Activated naive CD4-positive, alpha-beta T cell treated with anti-CD3 and anti-CD28 coated beads for 36 hours (primary cell): ENCODE measurements at regions of chr12 and their contacts with region 1.

Region 1: GRCh38 chr12:31245822-31246469 is 80.0 kb downstream of the SINHCAF start:
- DNase-seq: no peak
- H3K4me3 Mint-ChIP-seq: no peak overlapping the region
- H3K27ac Mint-ChIP-seq: no peak overlapping the region
- H3K4me1 Mint-ChIP-seq: no peaks in the 10 kb centered on the region
- H3K27me3 Mint-ChIP-seq: no peaks in the 10 kb centered on the region

Region 2: DNA sequence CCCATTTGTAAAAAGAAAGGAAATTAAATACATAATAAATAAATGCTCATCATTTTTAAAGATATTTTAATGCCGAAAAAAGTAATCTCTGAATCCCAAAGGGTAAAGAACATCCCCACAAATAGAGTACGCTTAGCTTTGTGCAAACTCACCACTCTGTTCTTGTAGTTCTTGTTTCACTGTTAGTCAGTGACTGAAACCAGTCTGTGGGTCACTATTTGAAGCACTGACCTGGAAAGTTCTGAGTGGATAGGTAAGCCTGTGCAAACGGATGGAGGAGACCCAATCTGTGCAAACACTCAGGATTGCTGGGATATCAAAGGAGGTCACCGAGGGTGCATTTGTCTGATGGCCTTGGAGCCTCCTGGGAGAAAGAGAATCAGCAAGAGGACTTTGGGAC is 387.5 kb before region 1 on chr12:
- CTCF ChIA-PET with region 1: no interaction called
- intact Hi-C with region 1: no loop called
- DNase-seq: no peak
- H3K4me3 Mint-ChIP-seq: no peak overlapping the region
- H3K27ac Mint-ChIP-seq: no peak overlapping the region
- H3K4me1 Mint-ChIP-seq: no peaks in the 10 kb centered on the region
- H3K27me3 Mint-ChIP-seq: peaks cover 4% of the 10 kb centered on the region

Region 3: DNA sequence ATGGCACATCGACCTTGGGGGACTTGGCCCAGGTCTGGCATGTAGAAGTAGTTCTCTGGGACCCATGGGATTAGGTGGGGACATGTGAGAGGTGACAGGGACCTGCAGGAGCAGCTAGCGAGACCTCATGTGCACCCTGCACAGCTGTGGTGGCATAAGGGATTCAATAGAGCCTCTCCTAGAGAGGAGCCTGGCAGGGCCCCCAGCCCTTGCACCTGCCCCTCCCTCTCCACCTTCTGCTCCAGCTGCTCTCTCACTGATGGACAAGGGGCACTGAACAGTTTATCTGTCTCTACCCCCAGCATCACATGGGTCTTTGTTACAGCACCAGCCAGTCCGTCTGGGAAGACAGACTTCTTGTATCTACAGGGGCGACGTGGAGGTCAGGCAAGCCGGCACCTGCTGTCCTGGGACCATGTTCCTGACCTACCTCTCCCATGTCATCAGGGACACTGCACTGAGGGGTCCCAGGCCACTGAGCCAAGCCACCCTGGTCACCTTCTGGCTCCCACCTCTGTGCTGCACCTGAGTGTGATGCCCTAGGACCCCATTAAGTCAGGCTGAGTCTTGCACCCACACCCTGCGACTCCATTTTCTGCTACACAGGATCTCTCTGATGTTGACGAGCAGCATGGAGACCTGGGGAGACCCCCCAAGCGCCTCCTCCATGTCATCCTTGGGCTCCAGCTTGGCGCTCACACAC is 139.7 kb before region 1 on chr12:
- CTCF ChIA-PET with region 1: no interaction called
- intact Hi-C with region 1: no loop called
- DNase-seq: no peak
- H3K4me3 Mint-ChIP-seq: no peak overlapping the region
- H3K27ac Mint-ChIP-seq: no peak overlapping the region
- H3K4me1 Mint-ChIP-seq: no peaks in the 10 kb centered on the region
- H3K27me3 Mint-ChIP-seq: peaks cover 4% of the 10 kb centered on the region

Region 4: GRCh38 chr12:31362759-31363415 is 116.9 kb after region 1 on chr12:
- CTCF ChIA-PET with region 1: interaction called, 7 read pairs
- intact Hi-C with region 1: loop called (anchors 1 kb)
- DNase-seq: peak; percentile 53
- H3K4me3 Mint-ChIP-seq: peak overlapping the region; percentile 38
- H3K27ac Mint-ChIP-seq: no peak overlapping the region
- H3K4me1 Mint-ChIP-seq: peaks cover 14% of the 10 kb centered on the region
- H3K27me3 Mint-ChIP-seq: no peaks in the 10 kb centered on the region

Region 5: GRCh38 chr12:31631784-31632183 is 385.8 kb after region 1 on chr12:
- CTCF ChIA-PET with region 1: no interaction called
- intact Hi-C with region 1: loop called (anchors 1 kb)
- DNase-seq: no peak
- H3K4me3 Mint-ChIP-seq: no peak overlapping the region
- H3K27ac Mint-ChIP-seq: no peak overlapping the region
- H3K4me1 Mint-ChIP-seq: peaks cover 4% of the 10 kb centered on the region
- H3K27me3 Mint-ChIP-seq: no peaks in the 10 kb centered on the region